ENCODE measurements at regions of chr2 and their contacts with region 1.

Region 1: GRCh38 chr2:38875576-38876367 is at the starts of genes DHX57 and MORN2:
- DNase-seq: peak; percentile 95
- H3K4me3 Mint-ChIP-seq: peak within 1 kb of the TSS; percentile 97
- H3K27ac Mint-ChIP-seq: peak within 1 kb of the TSS; percentile 96
- H3K4me1 Mint-ChIP-seq: peaks cover 21% of the 10 kb centered on the region
- H3K27me3 Mint-ChIP-seq: no peaks in the 10 kb centered on the region
- total RNA-seq, gene DHX57: 21.0 and 24.3 TPM in 2 replicates
- total RNA-seq, gene MORN2: 4.9 and 5.9 TPM in 2 replicates

Region 2: DNA sequence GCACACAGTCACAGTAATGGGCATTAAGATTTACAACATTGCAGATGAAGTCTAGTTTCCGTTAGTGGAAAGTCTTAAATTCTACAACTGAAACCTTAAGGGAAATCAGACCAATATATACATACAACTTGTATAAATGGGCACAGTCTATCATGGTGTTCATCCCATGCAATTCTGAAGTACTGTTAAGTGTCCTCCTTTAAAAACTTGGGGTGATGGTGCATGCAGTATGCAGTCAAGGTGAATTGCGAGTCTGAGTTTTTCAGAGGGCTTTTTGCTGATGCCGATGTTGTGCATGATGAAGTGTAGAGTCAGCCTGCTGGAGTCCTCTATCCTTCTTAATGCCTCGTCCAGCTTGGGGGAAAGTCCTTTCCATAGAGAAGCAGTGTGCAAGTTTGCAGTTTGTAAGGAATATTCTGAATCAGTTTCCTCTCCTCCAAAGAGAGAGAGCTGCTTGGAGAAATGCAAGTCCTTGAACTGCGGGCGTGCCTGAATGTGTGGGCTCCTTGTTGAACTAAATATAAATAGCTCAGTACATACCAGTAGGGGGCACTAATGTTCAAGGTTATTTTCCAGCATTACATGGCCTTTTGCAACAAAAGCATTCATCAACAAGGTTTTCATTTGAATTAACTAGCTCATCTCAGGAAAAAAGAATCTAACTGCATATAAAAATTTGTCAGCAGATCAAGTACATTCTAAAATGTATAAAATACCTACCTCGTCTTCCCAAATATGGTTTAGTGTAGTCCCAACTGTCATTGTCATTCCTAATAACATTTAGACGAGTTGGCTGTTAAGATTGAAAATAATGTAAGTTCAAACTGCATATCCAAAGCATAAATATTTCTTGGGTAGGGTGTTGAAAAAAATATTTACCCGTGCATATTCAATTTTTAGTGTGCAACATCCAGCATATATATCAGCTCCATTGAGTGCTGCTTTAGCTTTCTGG is 294.3 kb before region 1 on chr2:
- intact Hi-C with region 1: no loop called
- DNase-seq: peak; percentile 83
- H3K4me3 Mint-ChIP-seq: no peak overlapping the region
- H3K27ac Mint-ChIP-seq: peak overlapping the region; percentile 22
- H3K4me1 Mint-ChIP-seq: peaks cover 26% of the 10 kb centered on the region
- H3K27me3 Mint-ChIP-seq: no peaks in the 10 kb centered on the region

Region 3: DNA sequence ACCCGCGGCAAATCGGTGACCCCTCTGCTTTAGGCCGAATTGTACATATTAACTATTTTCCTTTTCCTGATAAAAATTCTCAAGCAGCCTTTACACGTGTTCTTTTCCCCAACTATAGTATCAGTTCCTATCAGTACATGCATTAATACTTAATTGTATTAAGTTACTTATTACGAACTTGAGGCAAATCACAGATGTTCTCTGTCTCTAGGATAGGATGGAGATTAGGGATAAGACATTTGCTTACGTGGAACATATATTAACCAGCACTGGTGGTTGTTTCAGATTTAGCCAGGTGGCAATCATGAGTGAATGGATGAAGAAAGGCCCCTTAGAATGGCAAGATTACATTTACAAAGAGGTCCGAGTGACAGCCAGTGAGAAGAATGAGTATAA is 97.1 kb before region 1 on chr2:
- intact Hi-C with region 1: loop called (anchors 2 kb)
- DNase-seq: no peak
- H3K4me3 Mint-ChIP-seq: peak overlapping the region; percentile 100
- H3K27ac Mint-ChIP-seq: peak overlapping the region; percentile 100
- H3K4me1 Mint-ChIP-seq: peaks cover 13% of the 10 kb centered on the region
- H3K27me3 Mint-ChIP-seq: peaks cover 18% of the 10 kb centered on the region

Region 4: DNA sequence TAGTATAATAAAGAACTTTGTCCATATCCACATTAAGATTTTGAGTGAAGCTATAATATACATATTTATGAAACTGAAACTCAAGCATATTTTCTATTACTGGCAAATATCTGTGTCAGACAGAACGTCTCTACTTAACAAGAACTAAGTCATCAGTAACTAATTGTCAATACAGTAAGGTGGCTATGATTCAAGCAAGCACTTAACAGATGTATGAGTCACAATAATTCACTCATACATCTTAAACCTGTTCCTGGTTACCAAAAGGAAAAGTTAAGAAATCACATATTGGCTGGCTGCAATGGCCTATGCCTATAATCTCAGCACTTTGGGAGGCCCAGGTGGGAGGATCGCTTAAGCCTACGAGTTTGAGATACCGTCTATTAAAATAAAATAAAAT is 149.1 kb after region 1 on chr2:
- intact Hi-C with region 1: no loop called
- DNase-seq: no peak
- H3K4me3 Mint-ChIP-seq: no peak overlapping the region
- H3K27ac Mint-ChIP-seq: no peak overlapping the region
- H3K4me1 Mint-ChIP-seq: no peaks in the 10 kb centered on the region
- H3K27me3 Mint-ChIP-seq: no peaks in the 10 kb centered on the region